Activated CD4-positive, alpha-beta T cell treated with anti-CD3 and anti-CD28 coated beads, Interleukin-2, amount 10 ng/mL, durations not matched to agents 7 days and 5 days (primary cell): ENCODE measurements at regions of chr1 and their contacts with region 1.

Region 1: GRCh38 chr1:95043141-95043980 is 29.4 kb downstream of the ALG14 start:
- DNase-seq: peak; percentile 82
- H3K4me3 Mint-ChIP-seq: no peak overlapping the region
- H3K27ac Mint-ChIP-seq: no peak overlapping the region
- H3K4me1 Mint-ChIP-seq: no peaks in the 10 kb centered on the region
- H3K27me3 Mint-ChIP-seq: no peaks in the 10 kb centered on the region

Region 2: DNA sequence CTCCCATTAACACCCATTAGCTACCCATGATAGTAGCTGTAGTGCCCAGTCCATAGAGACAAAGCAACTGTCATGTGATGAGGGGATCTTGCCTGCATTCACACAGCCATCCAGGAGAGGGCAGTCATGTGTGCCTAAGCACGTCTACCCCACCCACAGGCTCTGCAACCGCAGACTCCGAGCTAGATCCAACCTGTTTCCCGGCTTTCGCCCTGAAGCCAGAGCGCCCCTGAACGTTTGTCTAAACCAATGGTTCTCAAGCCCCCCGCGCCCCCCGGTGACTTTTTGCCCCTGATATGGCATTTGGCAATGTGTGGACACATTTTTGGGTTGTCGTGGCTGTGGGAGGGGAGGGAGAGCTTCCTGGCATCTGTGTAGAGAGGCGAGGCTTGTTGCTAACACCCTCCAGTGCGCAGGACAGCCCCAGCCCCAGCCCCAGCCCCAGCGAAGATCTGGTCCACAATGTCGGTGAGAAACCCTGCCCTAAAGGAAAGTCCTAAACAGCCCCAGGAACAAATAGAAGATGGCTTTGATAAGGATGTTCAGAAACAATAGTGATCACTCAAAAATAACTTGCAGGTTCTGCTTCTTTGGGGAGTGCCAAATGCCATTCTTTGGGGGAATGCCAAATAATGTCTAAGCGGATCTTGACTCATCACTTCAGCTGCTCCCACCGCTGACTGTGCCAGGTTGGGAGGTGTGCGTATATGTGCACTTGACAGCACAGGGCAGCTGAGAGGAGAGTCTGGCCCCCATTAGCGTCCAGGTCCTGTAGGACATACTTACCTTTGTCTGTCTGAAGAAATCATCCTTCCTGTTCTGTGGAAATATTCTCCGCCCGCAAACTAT is 188.7 kb before region 1 on chr1:
- CTCF ChIA-PET with region 1: interaction called, 30 read pairs
- POLR2A ChIA-PET with region 1: no interaction called
- DNase-seq: peak; percentile 86
- H3K4me3 Mint-ChIP-seq: no peak overlapping the region
- H3K27ac Mint-ChIP-seq: no peak overlapping the region
- H3K4me1 Mint-ChIP-seq: no peaks in the 10 kb centered on the region
- H3K27me3 Mint-ChIP-seq: peaks cover 6% of the 10 kb centered on the region

Region 3: DNA sequence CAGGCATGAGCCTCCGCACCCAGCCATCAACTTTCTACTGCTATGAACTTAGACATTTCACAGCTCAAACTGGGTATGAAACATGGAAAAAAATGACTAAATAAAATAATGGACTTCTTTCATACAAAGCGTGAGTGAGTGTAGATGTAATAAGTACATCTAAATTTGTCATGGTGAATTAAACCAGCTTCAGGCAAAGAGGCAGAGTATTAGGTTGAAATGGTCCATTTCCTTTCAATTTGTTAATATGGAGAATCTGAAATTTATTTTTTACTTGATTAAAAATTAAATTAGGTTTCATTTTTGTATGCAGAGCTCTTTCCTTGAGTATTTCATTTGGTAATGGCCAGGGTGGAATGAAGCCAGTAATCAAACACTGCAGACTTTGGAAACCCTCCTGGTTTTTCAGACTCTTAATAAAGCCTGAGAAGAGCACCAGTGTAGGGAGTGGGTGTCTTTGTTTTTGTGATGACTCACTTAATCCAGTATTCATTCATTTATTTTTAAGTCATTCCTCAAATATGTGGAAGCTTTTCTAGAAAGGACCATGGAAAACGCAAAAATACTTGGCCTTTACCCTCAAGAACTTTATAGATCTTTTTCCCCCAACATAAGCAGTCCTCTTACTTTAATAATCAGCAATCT is 19.8 kb before region 1 on chr1:
- CTCF ChIA-PET with region 1: interaction called, 11 read pairs
- POLR2A ChIA-PET with region 1: no interaction called
- DNase-seq: no peak
- H3K4me3 Mint-ChIP-seq: no peak overlapping the region
- H3K27ac Mint-ChIP-seq: no peak overlapping the region
- H3K4me1 Mint-ChIP-seq: peaks cover 8% of the 10 kb centered on the region
- H3K27me3 Mint-ChIP-seq: no peaks in the 10 kb centered on the region